ENCODE measurements at regions of chr9 and their contacts with region 1.

Region 1: DNA sequence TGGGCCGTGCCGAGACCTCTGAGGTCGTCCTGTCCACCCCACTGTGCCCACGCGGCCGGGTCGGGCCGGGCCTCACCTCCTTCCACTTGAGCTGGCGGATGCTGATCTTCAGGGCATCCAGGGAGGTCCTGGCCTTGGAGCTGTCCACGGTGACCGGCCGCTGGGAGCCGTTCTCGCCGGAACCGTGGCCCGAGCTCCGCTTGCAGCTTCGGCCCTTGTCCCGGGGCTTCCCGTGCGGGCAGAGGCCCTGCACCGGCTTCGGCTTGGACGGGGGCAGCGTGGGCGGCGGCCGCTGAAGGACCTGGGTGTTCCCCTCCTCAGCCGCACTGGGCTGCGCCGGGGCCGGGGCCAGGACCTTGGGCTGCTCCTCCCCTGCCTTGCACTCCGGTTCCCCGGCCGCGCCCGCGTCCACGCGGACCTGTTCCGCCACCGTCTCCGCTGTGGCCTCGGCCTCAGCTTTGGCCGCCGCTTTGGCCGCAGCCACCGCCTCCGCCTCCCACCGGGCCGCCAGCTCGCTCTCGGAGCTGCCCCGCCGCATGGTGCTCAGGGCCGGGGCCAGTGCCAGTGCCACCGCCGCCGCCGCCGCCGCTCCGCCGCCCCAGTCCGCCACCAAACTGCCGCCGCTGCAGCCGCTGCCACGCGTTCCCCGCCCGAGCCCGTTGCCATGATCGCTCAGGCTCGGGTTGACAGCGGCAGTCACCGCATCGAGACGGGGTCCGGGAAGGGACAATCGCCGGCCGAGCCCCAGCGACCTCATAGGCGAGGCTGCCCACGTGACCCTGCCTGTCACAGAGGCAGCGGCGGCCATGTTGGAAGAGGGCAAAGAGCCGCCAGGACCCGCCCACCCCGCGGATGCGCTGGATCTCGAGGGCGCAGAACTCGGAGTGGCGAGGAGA is at the start of gene TTLL11:
- DNase-seq: peak; percentile 93 to 98 (median 96)
- ATAC-seq: peak; percentile 96
- H3K4me3 ChIP-seq: peak within 1 kb of the TSS; percentile 69
- H3K4me3 Mint-ChIP-seq: peak within 1 kb of the TSS; percentile 93
- H3K27ac ChIP-seq: no peak within 1 kb of the TSS
- H3K27ac Mint-ChIP-seq: peak within 1 kb of the TSS; percentile 40
- H3K4me1 ChIP-seq: peaks cover 40% of the 10 kb centered on the region
- H3K4me1 Mint-ChIP-seq: peaks cover 50% of the 10 kb centered on the region
- H3K27me3 ChIP-seq: no peaks in the 10 kb centered on the region
- H3K27me3 Mint-ChIP-seq: no peaks in the 10 kb centered on the region
- CTCF ChIP-seq: no peak
- total RNA-seq, gene TTLL11: 1.6 to 2.3 TPM

Region 2: DNA sequence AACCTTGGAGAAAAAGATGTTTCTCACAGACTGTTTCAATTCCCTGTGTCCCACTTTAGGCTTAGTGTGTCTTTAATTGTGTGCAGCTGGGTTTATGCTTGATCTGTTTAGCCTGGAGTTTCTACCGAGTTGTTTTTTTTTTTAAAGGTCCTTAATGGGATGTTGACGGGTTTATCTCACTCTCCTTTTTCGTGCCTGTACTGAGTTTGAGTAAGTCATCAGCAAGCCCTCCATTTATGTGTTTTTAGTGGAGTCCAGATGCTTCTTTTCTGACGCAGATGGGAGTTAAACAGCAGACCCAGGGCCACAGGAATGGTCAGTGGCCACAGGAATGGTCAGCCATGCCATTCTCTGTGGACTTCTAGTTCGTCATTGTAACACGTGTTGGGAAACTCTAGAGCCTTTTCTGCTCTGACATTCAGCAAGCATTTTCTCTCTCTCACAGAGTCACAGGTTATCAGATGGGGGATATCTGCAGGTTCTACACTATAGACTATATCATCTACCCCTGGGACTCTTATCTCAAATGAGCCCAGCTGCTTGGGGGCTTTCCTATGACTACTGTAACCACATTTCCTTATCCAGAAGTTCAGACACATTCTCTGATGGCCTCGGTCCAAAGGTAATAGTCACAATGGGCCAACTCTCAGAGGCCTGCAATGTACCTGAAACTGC is 190.3 kb before region 1 on chr9:
- CTCF ChIA-PET with region 1: no interaction called
- POLR2A ChIA-PET with region 1: no interaction called
- intact Hi-C with region 1: no loop called
- DNase-seq: no peak
- ATAC-seq: no peak
- H3K4me3 ChIP-seq: no peak overlapping the region
- H3K4me3 Mint-ChIP-seq: no peak overlapping the region
- H3K27ac ChIP-seq: no peak overlapping the region
- H3K27ac Mint-ChIP-seq: no peak overlapping the region
- H3K4me1 ChIP-seq: no peaks in the 10 kb centered on the region
- H3K4me1 Mint-ChIP-seq: no peaks in the 10 kb centered on the region
- H3K27me3 ChIP-seq: no peaks in the 10 kb centered on the region
- H3K27me3 Mint-ChIP-seq: no peaks in the 10 kb centered on the region
- CTCF ChIP-seq: no peak

Region 3: DNA sequence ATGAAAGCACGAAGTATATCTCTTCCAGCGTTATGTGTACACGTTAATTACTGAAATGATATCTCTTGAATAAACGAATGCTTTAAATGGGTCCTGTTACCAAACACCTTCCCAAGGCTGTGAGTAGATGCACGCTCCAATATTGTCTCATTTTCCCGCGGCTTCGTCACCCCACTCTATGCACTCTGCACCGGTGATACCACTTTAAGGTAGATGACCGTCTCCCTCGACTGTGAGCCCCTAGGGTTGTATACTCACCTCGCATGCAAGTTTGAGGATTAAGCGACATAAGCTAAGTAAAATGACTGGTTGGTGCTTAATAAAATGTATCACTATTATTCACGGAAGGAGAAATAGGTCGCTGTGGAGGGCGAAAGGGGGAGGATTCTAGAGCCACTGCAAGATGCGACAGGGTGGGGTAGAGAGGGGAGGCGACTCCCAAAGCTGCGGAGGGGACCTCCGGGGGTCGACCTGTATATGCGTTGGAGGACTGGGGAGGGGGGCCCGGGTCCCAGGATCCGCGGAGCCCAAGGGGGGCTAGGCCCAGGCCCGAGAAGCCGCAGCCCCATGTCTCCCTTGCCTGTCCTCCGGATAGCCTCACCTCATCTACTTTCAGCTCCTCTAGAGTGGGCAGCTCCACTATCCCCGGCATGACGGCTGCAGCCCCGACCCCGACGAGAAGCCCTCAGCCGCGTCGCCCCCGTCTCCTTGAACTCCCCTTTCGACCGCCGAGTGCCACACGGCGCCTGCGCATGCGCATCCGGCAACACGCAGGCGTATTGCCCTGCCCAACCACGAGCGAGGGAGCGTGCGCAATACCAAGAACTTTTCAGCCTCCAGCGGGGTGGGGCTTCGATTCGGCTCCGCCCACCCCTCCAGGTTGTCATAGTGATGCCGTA is 66.4 kb after region 1 on chr9 and contains the starts of genes MORN5 and NDUFA8:
- CTCF ChIA-PET with region 1: no interaction called
- POLR2A ChIA-PET with region 1: interaction called, 3 read pairs
- intact Hi-C with region 1: loop called (anchors 2 to 5 kb)
- DNase-seq: peak; percentile 93 to 99 (median 96)
- ATAC-seq: peak; percentile 95
- H3K4me3 ChIP-seq: peak within 1 kb of the TSS; percentile 97
- H3K4me3 Mint-ChIP-seq: peak within 1 kb of the TSS; percentile 93
- H3K27ac ChIP-seq: peak within 1 kb of the TSS; percentile 68 to 73
- H3K27ac Mint-ChIP-seq: peak within 1 kb of the TSS; percentile 88
- H3K4me1 ChIP-seq: peaks cover 18% of the 10 kb centered on the region
- H3K4me1 Mint-ChIP-seq: peaks cover 45% of the 10 kb centered on the region
- H3K27me3 ChIP-seq: no peaks in the 10 kb centered on the region
- H3K27me3 Mint-ChIP-seq: peaks cover 17% of the 10 kb centered on the region
- CTCF ChIP-seq: no peak
- total RNA-seq, gene MORN5: not detected
- total RNA-seq, gene NDUFA8: 4.5 to 5.0 TPM

Region 4: DNA sequence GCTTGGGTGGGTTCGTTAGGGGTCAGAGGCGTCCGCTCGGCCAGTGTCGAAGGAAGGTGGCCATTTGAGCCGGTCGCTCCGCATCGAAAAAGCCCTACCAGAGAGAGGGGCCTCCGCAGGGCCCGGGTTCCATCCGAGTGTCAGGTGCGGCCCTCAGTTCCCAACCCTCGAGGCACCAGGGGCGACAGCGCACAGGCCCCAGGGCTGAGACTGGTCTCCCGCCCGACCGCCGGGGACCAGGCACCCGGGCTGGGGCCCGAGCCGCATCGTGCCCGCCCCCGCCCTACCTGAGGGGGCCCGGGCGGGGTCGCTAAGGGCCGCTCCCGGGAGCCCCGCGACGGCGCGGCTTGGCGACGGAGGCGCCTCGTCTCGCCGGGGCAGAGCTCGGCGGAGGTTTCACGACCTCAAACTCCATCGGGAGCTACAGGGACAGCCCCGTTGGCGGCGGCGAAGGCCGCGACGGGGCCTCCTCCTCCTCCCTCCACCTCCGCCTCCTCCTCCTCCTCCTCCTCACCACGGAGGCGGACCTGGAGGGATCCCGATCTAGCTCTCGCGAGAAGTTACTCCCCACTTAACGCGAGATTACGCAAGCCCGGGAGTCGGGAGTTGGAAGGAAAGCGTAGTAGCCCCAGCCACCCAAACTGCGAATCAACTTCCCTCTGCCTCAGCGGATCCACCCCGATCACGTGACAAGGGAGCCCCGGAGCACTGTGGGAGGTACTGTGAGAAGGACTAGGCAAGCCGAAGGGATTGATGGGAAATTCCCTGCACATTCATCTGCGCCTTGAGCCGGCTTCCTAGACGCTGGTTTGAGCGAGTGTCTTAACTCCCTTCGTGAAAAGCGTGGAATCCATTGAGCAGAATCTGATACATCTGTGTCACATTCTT is 812.2 kb after region 1 on chr9 and contains the start of gene RC3H2:
- CTCF ChIA-PET with region 1: no interaction called
- POLR2A ChIA-PET with region 1: no interaction called
- intact Hi-C with region 1: loop called (anchors 10 kb)
- DNase-seq: peak; percentile 91 to 100 (median 94)
- ATAC-seq: peak; percentile 92
- H3K4me3 ChIP-seq: peak within 1 kb of the TSS; percentile 89
- H3K4me3 Mint-ChIP-seq: peak within 1 kb of the TSS; percentile 100
- H3K27ac ChIP-seq: peak within 1 kb of the TSS; percentile 87
- H3K27ac Mint-ChIP-seq: peak within 1 kb of the TSS; percentile 99
- H3K4me1 ChIP-seq: peaks cover 11% of the 10 kb centered on the region
- H3K4me1 Mint-ChIP-seq: peaks cover 36% of the 10 kb centered on the region
- H3K27me3 ChIP-seq: no peaks in the 10 kb centered on the region
- H3K27me3 Mint-ChIP-seq: no peaks in the 10 kb centered on the region
- CTCF ChIP-seq: no peak
- total RNA-seq, gene RC3H2: 85.2 to 86.8 TPM

Region 5: DNA sequence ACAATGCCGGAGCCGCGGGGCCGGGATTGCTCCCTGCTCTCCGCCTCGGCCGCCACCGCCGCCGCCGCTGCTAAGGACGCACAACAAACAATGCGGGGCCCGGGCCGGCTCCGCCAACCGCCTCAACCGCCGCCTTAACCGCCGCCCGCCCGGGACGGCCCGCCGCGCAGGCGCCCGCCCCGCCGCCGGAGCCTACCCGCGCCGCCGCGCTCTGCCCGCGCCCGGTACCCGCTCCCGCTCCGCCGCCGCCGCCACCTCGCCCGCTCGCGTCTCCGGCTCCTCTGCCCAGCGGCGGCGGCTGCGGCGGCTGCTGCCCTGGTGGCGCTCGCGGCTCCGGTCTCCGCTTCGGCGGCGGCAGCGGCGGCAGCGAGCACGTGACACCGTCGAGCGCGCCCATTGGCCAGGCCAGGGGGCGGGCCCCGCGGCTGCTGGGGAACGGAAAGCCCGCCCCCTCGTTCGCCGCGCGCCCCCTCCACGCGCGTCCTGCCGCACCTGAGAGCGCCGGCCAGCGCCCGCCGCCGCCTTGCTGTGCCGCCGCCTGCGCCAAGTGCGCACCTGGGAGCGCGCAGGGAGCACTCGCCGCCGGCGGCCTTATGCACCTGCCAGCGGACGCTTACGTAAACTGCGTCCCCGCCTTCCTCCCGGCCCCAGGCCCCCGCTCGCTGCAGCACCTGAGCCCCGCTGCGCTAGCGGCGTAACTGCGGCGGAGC is 1175.5 kb after region 1 on chr9 and contains the start of gene STRBP:
- CTCF ChIA-PET with region 1: no interaction called
- POLR2A ChIA-PET with region 1: no interaction called
- intact Hi-C with region 1: loop called in 1 of 2 experiments (anchors 5 kb)
- DNase-seq: peak; percentile 85 to 98 (median 94)
- ATAC-seq: peak; percentile 88
- H3K4me3 ChIP-seq: peak within 1 kb of the TSS; percentile 76
- H3K4me3 Mint-ChIP-seq: peak within 1 kb of the TSS; percentile 89
- H3K27ac ChIP-seq: peak within 1 kb of the TSS; percentile 62 to 84
- H3K27ac Mint-ChIP-seq: peak within 1 kb of the TSS; percentile 73
- H3K4me1 ChIP-seq: peaks cover 30% of the 10 kb centered on the region
- H3K4me1 Mint-ChIP-seq: peaks cover 35% of the 10 kb centered on the region
- H3K27me3 ChIP-seq: no peaks in the 10 kb centered on the region
- H3K27me3 Mint-ChIP-seq: no peaks in the 10 kb centered on the region
- CTCF ChIP-seq: no peak
- total RNA-seq, gene STRBP: 10.9 to 12.0 TPM